ENCODE measurements at regions of chr21 and their contacts with region 1.

Region 1: GRCh38 chr21:45596704-45597318 is 46.7 kb upstream of the PCBP3 start:
- DNase-seq: peak; percentile 74
- ATAC-seq: peak; percentile 82
- H3K4me3 Mint-ChIP-seq: no peak overlapping the region
- H3K27ac Mint-ChIP-seq: no peak overlapping the region
- H3K4me1 Mint-ChIP-seq: peaks cover 10% of the 10 kb centered on the region
- H3K27me3 Mint-ChIP-seq: peaks cover 13% of the 10 kb centered on the region
- CTCF ChIP-seq: no peak

Region 2: GRCh38 chr21:45542242-45542666 is 54.6 kb before region 1 on chr21 and contains the start of gene SLC19A1:
- CTCF ChIA-PET with region 1: no interaction called
- POLR2A ChIA-PET with region 1: no interaction called
- intact Hi-C with region 1: loop called (anchors 2 kb)
- DNase-seq: peak; percentile 81
- ATAC-seq: peak; percentile 94
- H3K4me3 Mint-ChIP-seq: peak within 1 kb of the TSS; percentile 77
- H3K27ac Mint-ChIP-seq: no peak within 1 kb of the TSS
- H3K4me1 Mint-ChIP-seq: peaks cover 4% of the 10 kb centered on the region
- H3K27me3 Mint-ChIP-seq: no peaks in the 10 kb centered on the region
- CTCF ChIP-seq: no peak
- total RNA-seq, gene SLC19A1: 7.4 and 10.7 TPM in 2 replicates

Region 3: DNA sequence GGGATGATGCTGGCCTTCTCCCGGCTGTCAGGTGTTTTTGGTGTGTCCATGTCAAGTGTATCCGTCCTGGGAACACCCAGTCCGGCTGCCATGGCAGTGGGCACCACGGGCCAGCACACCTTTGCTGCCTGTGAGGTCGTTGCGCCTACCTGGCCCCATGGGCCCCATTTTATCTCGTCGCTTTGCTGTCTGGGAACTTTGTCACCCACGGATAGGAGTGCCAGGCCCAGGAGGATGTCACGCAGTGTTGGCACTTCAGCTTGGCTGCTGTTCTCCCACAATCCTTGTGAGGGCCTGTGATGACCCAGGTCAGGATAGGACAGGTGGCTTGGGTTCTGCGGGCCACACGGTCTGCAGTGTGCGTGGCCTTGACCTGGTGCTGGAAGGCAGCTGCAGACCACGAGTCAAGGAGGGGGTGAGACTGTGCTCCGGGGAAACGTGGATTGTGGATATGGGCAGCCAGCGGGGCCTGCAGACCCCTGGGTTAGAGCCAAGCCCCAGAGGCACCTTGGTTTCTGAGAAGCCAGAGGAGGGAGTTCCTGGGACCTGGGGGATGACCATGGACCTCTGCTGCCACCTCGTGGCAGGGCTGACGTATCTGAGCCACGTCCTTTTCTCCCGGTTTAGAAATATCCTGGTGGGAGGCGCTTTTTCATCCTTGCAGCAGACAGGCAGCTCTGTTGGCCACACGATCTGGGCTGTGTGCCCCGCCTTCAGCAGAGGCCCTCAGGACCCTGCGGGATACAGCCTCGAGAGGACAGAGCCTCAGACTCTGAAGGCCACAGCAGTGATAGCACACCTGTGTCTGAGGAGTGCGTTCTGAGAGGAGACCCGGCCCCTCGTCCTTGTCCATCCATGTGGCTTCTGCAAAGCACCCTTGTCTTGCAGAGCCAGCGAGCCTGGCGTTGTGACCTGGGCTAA is 223.6 kb after region 1 on chr21:
- CTCF ChIA-PET with region 1: no interaction called
- POLR2A ChIA-PET with region 1: no interaction called
- intact Hi-C with region 1: loop called (anchors 1 kb)
- DNase-seq: peak; percentile 60
- ATAC-seq: peak; percentile 73
- H3K4me3 Mint-ChIP-seq: no peak overlapping the region
- H3K27ac Mint-ChIP-seq: no peak overlapping the region
- H3K4me1 Mint-ChIP-seq: peaks cover 3% of the 10 kb centered on the region
- H3K27me3 Mint-ChIP-seq: peaks cover 23% of the 10 kb centered on the region
- CTCF ChIP-seq: no peak